AG04450 (cell line): ENCODE measurements at regions of chr20 and their contacts with region 1.

Region 1: GRCh38 chr20:44888226-44889103 is 3.0 kb downstream of the YWHAB start:
- DNase-seq: no peak
- H3K4me3 ChIP-seq: no peak overlapping the region
- H3K27ac ChIP-seq: no peak overlapping the region
- H3K27me3 ChIP-seq: no peaks in the 10 kb centered on the region
- CTCF ChIP-seq: peak; percentile 25; the same call in 1 of the 2 replicates

Region 2: GRCh38 chr20:44618318-44618731 is 270.1 kb before region 1 on chr20:
- CTCF ChIA-PET with region 1: no interaction called
- POLR2A ChIA-PET with region 1: no interaction called
- DNase-seq: no peak
- H3K4me3 ChIP-seq: no peak overlapping the region
- H3K27ac ChIP-seq: no peak overlapping the region
- H3K27me3 ChIP-seq: no peaks in the 10 kb centered on the region
- CTCF ChIP-seq: no peak

Region 3: GRCh38 chr20:44901974-44902373 is 13.5 kb after region 1 on chr20:
- CTCF ChIA-PET with region 1: interaction called, 15 read pairs
- POLR2A ChIA-PET with region 1: no interaction called
- DNase-seq: no peak
- H3K4me3 ChIP-seq: no peak overlapping the region
- H3K27ac ChIP-seq: no peak overlapping the region
- H3K27me3 ChIP-seq: no peaks in the 10 kb centered on the region
- CTCF ChIP-seq: no peak